ENCODE measurements at regions of chr2 and their contacts with region 1.

Region 1: DNA sequence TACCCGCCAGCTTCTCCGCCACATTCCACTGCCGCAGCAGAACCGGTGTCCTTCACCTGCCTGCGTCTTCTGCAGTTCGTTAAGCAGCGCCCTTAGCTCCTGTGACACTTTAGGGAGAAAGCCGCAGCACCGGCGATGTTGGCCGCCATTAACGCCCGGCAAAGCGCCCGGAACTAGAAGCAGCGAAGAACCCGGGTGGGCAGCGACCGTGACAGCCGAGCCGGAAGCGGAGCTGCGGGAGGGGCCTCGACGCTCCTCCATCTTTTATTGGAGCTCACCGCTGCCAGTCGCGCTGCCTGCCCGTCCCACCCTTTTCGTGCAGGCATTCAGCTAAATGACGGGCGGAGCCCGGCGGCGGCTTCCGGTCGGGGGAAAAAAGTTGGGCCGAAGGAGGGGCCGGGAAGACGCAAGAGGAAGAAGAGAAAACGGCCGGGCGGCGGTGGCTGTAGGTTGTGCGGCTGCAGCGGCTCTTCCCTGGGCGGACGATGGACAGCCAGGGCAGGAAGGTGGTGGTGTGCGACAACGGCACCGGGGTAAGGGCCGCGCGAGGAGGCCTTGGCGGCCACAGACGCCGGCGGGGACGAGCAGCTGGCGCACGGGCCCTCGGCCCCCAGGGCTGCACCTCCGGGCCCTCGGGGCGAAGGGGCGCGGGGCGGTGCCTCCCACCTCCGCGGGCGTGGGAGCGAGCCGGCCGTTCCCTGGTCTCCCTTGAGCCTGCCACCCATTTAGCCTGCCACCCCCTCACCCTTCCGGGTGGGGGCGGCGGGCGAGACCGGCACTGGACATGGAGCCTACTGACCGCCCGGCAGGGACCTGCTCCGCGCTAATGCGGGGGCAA is at the start of gene ACTR2:
- DNase-seq: peak; percentile 97
- ATAC-seq: peak; percentile 93
- H3K4me3 Mint-ChIP-seq: peak within 1 kb of the TSS; percentile 99
- H3K27ac Mint-ChIP-seq: peak within 1 kb of the TSS; percentile 100
- H3K4me1 Mint-ChIP-seq: peaks cover 34% of the 10 kb centered on the region
- H3K27me3 Mint-ChIP-seq: no peaks in the 10 kb centered on the region
- total RNA-seq, gene ACTR2: 478 to 493 TPM

Region 2: GRCh38 chr2:65056215-65057053 is 171.2 kb before region 1 on chr2 and contains the start of gene CEP68:
- CTCF ChIA-PET with region 1: no interaction called
- POLR2A ChIA-PET with region 1: interaction called, 21 read pairs
- DNase-seq: peak; percentile 98
- ATAC-seq: peak; percentile 95
- H3K4me3 Mint-ChIP-seq: peak within 1 kb of the TSS; percentile 95
- H3K27ac Mint-ChIP-seq: peak within 1 kb of the TSS; percentile 88
- H3K4me1 Mint-ChIP-seq: peaks cover 58% of the 10 kb centered on the region
- H3K27me3 Mint-ChIP-seq: no peaks in the 10 kb centered on the region
- total RNA-seq, gene CEP68: 8.1 to 9.7 TPM

Region 3: GRCh38 chr2:65129826-65130663 is 97.6 kb before region 1 on chr2 and contains the start of gene RAB1A:
- CTCF ChIA-PET with region 1: interaction called, 4 read pairs
- POLR2A ChIA-PET with region 1: interaction called, 29 read pairs
- DNase-seq: peak; percentile 100
- ATAC-seq: peak; percentile 96
- H3K4me3 Mint-ChIP-seq: peak within 1 kb of the TSS; percentile 100
- H3K27ac Mint-ChIP-seq: peak within 1 kb of the TSS; percentile 100
- H3K4me1 Mint-ChIP-seq: peaks cover 32% of the 10 kb centered on the region
- H3K27me3 Mint-ChIP-seq: no peaks in the 10 kb centered on the region
- total RNA-seq, gene RAB1A: 58.7 to 62.7 TPM

Region 4: DNA sequence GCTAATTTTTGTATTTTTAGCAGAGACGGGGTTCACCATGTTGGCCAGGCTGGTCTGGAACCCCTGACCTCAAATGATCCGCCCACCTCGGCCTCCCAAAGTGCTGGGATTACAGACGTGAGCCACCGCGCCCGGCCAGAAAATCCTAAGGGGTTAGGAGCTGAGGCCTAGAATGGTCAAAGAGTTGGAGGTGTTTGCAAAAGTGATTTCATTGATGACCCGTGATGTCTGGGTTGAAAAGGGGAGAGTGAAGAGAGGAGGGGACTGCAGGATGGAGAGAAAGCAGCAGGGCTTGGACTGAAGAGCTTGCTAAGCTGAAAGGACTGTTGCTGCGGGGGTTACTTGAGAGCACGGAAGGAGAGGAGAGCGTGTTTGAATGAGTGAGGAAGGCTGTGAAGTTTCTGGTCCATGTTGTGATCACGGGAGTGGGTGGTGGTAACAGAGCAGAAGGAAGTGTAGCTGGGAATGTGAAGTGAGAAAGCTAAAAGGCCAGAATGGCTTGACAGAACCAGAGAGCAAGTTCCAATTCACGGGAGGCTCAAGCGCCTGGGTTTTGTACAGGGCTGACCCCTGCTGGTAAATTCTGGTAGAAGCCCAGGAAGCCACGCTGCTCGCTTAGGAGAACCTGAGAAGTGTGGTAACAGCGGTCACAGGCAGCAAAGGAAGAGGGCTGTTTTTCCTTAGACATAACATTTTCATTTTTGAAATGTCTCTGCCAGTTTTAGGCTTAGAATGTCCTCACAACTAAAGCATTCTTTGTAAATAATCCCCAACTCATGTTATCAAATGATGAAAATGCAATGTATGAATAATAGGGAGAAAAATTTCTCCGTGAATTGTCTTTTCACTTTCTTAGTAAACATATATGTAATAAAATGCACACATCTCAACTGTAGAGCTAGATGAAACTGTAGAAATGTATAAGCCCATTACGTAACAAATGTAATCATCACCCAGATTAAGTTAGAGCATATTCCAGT is 40.5 kb before region 1 on chr2:
- CTCF ChIA-PET with region 1: interaction called, 12 read pairs
- POLR2A ChIA-PET with region 1: interaction called, 4 read pairs
- DNase-seq: peak; percentile 78
- ATAC-seq: peak; percentile 98
- H3K4me3 Mint-ChIP-seq: no peak overlapping the region
- H3K27ac Mint-ChIP-seq: no peak overlapping the region
- H3K4me1 Mint-ChIP-seq: peaks cover 11% of the 10 kb centered on the region
- H3K27me3 Mint-ChIP-seq: peaks cover 3% of the 10 kb centered on the region

Region 5: GRCh38 chr2:65215946-65216345 is 11.7 kb before region 1 on chr2:
- CTCF ChIA-PET with region 1: interaction called, 3 read pairs
- POLR2A ChIA-PET with region 1: interaction called, 23 read pairs
- DNase-seq: no peak
- ATAC-seq: no peak
- H3K4me3 Mint-ChIP-seq: no peak overlapping the region
- H3K27ac Mint-ChIP-seq: no peak overlapping the region
- H3K4me1 Mint-ChIP-seq: peaks cover 3% of the 10 kb centered on the region
- H3K27me3 Mint-ChIP-seq: no peaks in the 10 kb centered on the region

Region 6: GRCh38 chr2:65256054-65256453 is 28.4 kb after region 1 on chr2:
- CTCF ChIA-PET with region 1: interaction called, 4 read pairs
- POLR2A ChIA-PET with region 1: interaction called, 15 read pairs
- DNase-seq: no peak
- ATAC-seq: no peak
- H3K4me3 Mint-ChIP-seq: no peak overlapping the region
- H3K27ac Mint-ChIP-seq: no peak overlapping the region
- H3K4me1 Mint-ChIP-seq: peaks cover 3% of the 10 kb centered on the region
- H3K27me3 Mint-ChIP-seq: no peaks in the 10 kb centered on the region

Region 7: DNA sequence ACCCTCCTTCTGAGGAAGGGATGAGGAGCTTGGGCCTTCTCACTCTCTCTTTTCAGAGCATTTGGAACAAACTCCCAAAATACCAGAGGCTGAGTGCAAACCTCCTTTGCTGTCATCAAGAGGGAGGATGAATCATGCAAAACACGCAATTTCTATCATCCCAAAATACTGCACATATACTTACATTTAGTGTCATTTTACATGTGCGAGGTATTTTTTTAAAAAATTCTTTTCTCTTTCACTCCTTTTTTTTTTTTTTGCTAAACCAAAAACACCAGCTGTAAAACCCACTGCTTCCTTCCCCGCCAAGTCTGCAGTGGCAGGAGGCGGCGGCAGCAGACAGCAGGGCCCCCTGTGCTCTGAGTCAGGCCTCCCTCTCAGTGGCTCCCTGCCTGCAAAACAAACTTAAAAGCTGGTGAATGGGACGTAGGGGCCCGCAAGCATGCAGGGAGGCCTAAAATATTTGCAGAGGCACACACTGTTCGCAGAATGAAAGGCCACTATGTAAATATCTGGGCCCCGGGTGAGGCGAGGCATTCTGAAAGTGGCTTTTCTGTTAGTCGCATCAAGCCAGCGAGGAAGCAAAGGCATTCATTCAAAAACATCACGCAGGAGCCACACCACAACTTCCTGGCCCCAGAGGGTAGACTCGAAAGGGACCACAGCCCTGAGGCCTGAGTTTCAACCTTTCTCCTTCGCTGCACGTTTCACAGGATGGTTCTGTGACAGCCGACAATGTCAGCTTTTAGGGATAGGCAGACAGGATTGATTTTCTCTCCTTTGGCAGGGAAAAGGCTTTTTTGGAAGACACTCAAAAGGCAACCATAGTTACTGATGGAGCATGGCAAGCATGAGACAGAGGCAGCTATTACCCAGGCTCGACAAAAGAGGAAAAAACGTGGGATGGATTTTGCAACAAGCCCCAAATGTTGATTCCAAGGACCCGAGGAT is 73.4 kb after region 1 on chr2:
- CTCF ChIA-PET with region 1: no interaction called
- POLR2A ChIA-PET with region 1: interaction called, 13 read pairs
- DNase-seq: peak; percentile 87
- ATAC-seq: peak; percentile 96
- H3K4me3 Mint-ChIP-seq: peak overlapping the region; percentile 74
- H3K27ac Mint-ChIP-seq: peak overlapping the region; percentile 94
- H3K4me1 Mint-ChIP-seq: peaks cover 58% of the 10 kb centered on the region
- H3K27me3 Mint-ChIP-seq: peaks cover 25% of the 10 kb centered on the region

Region 8: GRCh38 chr2:65350684-65351083 is 123.0 kb after region 1 on chr2:
- CTCF ChIA-PET with region 1: no interaction called
- POLR2A ChIA-PET with region 1: no interaction called
- DNase-seq: no peak
- ATAC-seq: no peak
- H3K4me3 Mint-ChIP-seq: no peak overlapping the region
- H3K27ac Mint-ChIP-seq: no peak overlapping the region
- H3K4me1 Mint-ChIP-seq: peaks cover 16% of the 10 kb centered on the region
- H3K27me3 Mint-ChIP-seq: peaks cover 7% of the 10 kb centered on the region

Measured in activated CD8-positive, alpha-beta T cell treated with anti-CD3 and anti-CD28 coated beads, Interleukin-2, amount 10 ng/mL, durations not matched to agents 7 days and 5 days (primary cell).